Activated CD4-positive, alpha-beta T cell treated with anti-CD3 and anti-CD28 coated beads for 36 hours (primary cell): ENCODE measurements at regions of chr9 and their contacts with region 1.

Region 1: DNA sequence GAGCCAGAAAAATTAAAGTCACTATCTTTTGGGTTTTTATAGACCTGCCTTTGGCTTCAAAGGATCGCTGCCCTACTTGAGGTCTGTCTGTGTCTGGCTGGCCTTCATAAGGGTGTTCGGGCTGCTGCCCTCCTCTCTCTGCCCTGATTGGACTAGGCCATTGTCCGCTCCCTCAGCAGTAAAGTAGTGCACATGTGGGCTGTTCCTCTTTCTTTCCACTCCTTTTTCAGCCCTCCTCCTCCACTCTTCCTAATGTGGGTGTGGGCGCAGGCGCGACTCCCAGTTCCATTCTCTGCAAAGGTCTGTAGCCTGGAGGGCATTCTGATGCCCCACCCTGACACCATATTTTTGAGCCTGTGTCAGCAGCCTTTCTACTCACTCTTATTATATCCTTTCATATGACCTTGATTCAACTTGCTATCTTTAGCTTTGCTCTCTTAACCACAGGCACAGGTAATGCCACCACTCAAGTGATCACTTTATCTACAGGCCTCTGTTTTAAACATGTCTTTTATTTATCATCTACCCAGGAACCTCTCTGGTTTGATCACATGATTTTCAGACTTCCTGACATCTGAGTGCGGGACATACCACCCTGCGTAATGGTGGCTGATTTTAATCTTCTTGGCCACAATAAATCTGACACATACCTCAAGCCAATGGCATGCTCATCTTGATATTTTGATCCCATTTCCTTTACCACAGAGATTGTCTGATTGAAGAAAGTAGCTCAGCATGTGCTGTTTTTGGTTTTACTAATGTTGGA is 144.5 kb downstream of the AOPEP start:
- DNase-seq: peak; percentile 42
- ATAC-seq: peak; percentile 63
- H3K4me3 Mint-ChIP-seq: no peak overlapping the region
- H3K27ac Mint-ChIP-seq: peak overlapping the region; percentile 79
- H3K4me1 Mint-ChIP-seq: peaks cover 45% of the 10 kb centered on the region
- H3K27me3 Mint-ChIP-seq: no peaks in the 10 kb centered on the region

Region 2: GRCh38 chr9:94802793-94803192 is 68.2 kb before region 1 on chr9:
- CTCF ChIA-PET with region 1: no interaction called
- POLR2A ChIA-PET with region 1: no interaction called
- intact Hi-C with region 1: loop called in 1 of 2 experiments (anchors 1 kb)
- DNase-seq: peak; percentile 54
- ATAC-seq: peak; percentile 90
- H3K4me3 Mint-ChIP-seq: no peak overlapping the region
- H3K27ac Mint-ChIP-seq: no peak overlapping the region
- H3K4me1 Mint-ChIP-seq: peaks cover 26% of the 10 kb centered on the region
- H3K27me3 Mint-ChIP-seq: no peaks in the 10 kb centered on the region